Pancreas (tissue), 10 donors: ENCODE measurements at regions of chr1 and their contacts with region 1.

Region 1: DNA sequence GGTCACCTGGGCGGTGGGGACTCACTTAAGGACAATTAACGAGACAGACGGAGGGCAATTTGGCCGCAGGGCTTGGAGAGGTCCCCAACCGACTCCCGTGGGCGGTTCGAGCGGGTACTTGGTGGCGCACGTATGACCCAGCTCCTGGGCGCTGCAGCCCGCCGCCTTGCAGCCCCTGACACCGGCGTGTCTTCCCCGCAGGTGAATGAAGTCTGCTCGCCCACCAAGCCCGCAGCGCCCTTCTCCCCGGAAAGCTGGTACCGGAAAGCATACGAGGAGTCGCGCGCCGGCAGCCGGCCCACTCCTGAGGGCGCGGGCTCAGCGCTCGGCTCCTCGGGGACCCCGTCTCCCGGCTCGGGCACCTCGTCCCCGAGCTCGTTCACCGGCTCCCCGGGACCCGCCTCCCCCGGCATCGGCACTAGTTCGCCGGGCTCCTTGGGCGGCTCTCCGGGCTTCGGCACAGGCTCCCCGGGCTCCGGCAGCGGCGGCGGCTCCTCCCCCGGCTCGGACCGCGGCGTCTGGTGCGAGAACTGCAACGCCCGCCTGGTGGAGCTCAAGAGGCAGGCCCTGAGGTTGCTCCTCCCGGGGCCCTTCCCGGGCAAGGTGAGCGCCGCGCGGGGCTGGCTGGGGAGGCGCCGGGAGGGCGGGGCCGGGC is 1.4 kb downstream of the KIF26B start:
- DNase-seq: peak; percentile 82 to 97 (median 90)
- ATAC-seq: peak; percentile 90 to 93 (median 92)
- H3K4me3 ChIP-seq: peak overlapping the region; percentile 33 to 55 (median 50)
- H3K27ac ChIP-seq: no peak overlapping the region
- H3K4me1 ChIP-seq: peaks cover 6 to 26% (median 7%) of the 10 kb centered on the region in 3 donors
- H3K27me3 ChIP-seq: peaks cover 0 to 3% (median 0%) of the 10 kb centered on the region in 4 donors
- CTCF ChIP-seq: peak; percentile 70 to 83 (median 81)

Region 2: GRCh38 chr1:245277276-245277675 is 121.1 kb after region 1 on chr1:
- intact Hi-C with region 1: loop called in 1 of 3 experiments (anchors 5 kb)
- DNase-seq: no peak
- ATAC-seq: peak in 3 of 4 donors; percentile 57 to 84 (median 59)
- H3K4me3 ChIP-seq: no peak overlapping the region
- H3K27ac ChIP-seq: no peak overlapping the region
- H3K4me1 ChIP-seq: no peaks in the 10 kb centered on the region
- H3K27me3 ChIP-seq: no peaks in the 10 kb centered on the region
- CTCF ChIP-seq: peak in 1 of 4 donors; percentile 19

Region 3: GRCh38 chr1:245298781-245299180 is 142.6 kb after region 1 on chr1:
- intact Hi-C with region 1: no loop called
- DNase-seq: peak in 4 of 6 donors; percentile 46 to 71 (median 61)
- ATAC-seq: peak; percentile 85 to 92 (median 90)
- H3K4me3 ChIP-seq: peak overlapping the region in 1 of 4 donors; percentile 9
- H3K27ac ChIP-seq: peak overlapping the region in 3 of 4 donors; percentile 16 to 46 (median 25)
- H3K4me1 ChIP-seq: peaks cover 13 to 17% (median 15%) of the 10 kb centered on the region in 3 donors
- H3K27me3 ChIP-seq: peaks cover 0 to 9% (median 0%) of the 10 kb centered on the region in 4 donors
- CTCF ChIP-seq: no peak

Region 4: GRCh38 chr1:245380790-245381535 is 224.8 kb after region 1 on chr1:
- intact Hi-C with region 1: loop called in 2 of 3 experiments (anchors 5 to 10 kb)
- DNase-seq: no peak
- ATAC-seq: no peak
- H3K4me3 ChIP-seq: no peak overlapping the region
- H3K27ac ChIP-seq: no peak overlapping the region
- H3K4me1 ChIP-seq: no peaks in the 10 kb centered on the region
- H3K27me3 ChIP-seq: peaks cover 0 to 3% (median 0%) of the 10 kb centered on the region in 4 donors
- CTCF ChIP-seq: peak in 1 of 4 donors; percentile 21

Region 5: DNA sequence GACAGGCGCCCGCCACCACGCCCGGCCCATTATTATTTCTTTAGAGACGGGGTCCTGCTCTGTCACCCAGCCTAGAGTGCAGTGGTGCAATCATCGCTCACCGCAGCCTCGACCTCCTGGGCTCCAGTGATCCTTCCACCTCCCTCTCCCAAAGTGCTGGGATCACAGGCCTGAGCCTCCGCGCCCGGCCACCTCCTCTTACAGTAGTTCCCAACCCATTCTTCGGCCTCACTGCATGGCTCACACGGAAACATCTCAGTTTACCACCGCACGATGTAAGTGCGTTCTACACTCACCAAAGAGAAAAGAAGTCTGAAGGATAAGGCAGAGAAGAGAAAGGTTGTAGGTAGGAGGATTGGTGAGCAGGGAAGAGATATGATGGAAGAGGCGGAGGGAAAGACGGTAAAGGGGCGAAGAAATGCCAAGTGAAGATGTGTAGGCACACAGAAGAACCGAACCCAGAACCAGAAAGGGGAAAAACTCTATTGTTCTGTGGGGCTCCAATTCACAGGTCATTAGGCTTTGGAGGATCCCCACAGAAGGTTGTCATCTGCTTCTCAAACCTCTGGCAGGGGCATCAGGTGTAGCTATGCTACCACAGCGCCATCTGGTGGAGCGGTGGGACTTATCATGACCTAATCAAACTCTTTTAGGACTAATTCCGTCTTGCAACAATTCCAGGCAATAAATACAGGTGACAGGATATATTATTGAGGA is 846.7 kb after region 1 on chr1:
- intact Hi-C with region 1: loop called in 2 of 3 experiments (anchors 5 kb)
- DNase-seq: peak; percentile 61 to 97 (median 86)
- ATAC-seq: peak; percentile 80 to 93 (median 92)
- H3K4me3 ChIP-seq: no peak overlapping the region
- H3K27ac ChIP-seq: no peak overlapping the region
- H3K4me1 ChIP-seq: no peaks in the 10 kb centered on the region
- H3K27me3 ChIP-seq: no peaks in the 10 kb centered on the region
- CTCF ChIP-seq: peak; percentile 61 to 80 (median 74)